ENCODE measurements at regions of chr12 and their contacts with region 1.

Region 1: GRCh38 chr12:47686645-47687240 is 19.1 kb downstream of the RPAP3 start:
- DNase-seq: peak in 1 of 10 donors; percentile 25
- H3K4me3 ChIP-seq: no peak overlapping the region
- H3K27ac ChIP-seq: no peak overlapping the region
- H3K27me3 ChIP-seq: no peaks in the 10 kb centered on the region
- CTCF ChIP-seq: peak in 55 of 56 donors; percentile 42 to 86 (median 64)

Region 2: DNA sequence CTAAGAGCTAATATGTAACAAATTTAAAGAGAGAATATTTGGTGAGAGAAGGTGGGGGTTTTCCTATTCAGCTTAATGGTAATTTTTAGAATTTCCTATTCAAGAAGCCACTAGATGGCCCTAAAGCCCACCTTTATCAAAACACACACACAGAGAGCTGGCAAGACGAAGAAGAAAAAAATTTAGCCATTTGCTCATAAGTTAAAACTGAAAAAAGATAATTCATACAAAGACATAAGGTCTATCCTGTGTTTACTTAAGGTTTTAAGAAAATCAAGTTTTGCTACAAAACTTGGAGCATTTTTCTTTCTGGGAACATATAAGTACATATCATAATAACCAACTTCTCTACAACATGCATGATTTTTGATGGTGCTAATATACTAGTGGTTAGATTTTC is 654.1 kb before region 1 on chr12:
- intact Hi-C with region 1: loop called in 1 of 2 experiments (anchors 10 kb)
- DNase-seq: no peak
- H3K4me3 ChIP-seq: no peak overlapping the region
- H3K27ac ChIP-seq: no peak overlapping the region
- H3K27me3 ChIP-seq: peaks cover 0 to 4% (median 0%) of the 10 kb centered on the region in 45 donors
- CTCF ChIP-seq: peak in 55 of 56 donors; percentile 30 to 79 (median 58)

Region 3: GRCh38 chr12:47651368-47652254 is 35.1 kb before region 1 on chr12:
- intact Hi-C with region 1: loop called (anchors 2 to 5 kb)
- DNase-seq: peak; percentile 23 to 79 (median 62)
- H3K4me3 ChIP-seq: peak overlapping the region in 40 of 59 donors; percentile 2 to 57 (median 33)
- H3K27ac ChIP-seq: peak overlapping the region in 39 of 59 donors; percentile 2 to 71 (median 47)
- H3K27me3 ChIP-seq: no peaks in the 10 kb centered on the region
- CTCF ChIP-seq: peak; percentile 64 to 92 (median 81)

Measured in dorsolateral prefrontal cortex (tissue), 120 donors.